ENCODE measurements at regions of chr10 and their contacts with region 1.

Region 1: DNA sequence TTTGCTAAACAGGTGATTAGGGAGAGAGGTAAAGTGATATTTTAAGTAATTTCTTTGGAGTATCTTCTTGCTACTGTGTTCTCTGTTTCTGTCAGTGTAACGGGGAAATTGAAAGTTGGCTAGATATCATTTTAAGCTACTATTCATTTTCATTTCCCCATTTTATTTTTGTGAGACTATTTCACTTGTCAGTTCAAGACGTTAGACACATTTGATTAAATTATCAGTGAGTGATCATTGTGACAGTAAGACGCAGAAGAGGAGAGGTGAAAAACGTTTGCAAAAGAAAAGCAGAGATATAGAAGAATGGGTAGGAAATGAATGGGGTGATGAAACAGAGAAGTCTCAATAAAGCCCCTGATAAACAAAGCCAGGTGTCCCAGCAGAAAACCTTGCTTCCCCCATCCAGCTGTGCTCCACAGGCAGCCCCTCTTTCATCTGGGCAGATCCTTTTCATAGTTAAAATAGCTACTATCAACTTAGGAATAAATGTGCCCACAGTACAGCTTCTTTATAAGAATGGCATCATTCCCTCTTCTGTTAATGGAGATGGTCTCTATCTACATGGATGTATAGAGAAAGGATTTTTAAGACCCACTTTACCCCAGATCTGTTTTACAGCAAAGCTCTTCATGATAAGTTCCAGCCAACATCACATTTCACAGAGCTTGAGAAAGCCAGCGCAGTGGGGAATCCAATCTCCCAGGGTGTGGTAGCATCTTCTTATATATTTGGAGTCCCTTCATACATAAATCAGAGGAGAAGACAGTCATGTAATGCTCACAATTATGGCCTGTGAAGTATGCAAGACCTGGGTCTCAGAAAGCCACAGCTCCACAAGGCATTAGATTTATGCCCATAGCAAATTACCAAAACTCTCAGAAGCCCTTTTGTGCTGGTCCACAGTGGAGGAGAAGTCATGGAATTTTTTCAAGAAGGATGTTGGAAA is 138.1 kb upstream of the ITGB1 start:
- DNase-seq: peak; percentile 84
- H3K4me3 ChIP-seq: peak overlapping the region; percentile 35
- H3K27ac ChIP-seq: peak overlapping the region; percentile 99
- H3K4me1 ChIP-seq: peaks cover 54% of the 10 kb centered on the region
- CTCF ChIP-seq: no peak

Region 2: GRCh38 chr10:32318476-32318896 is 777.7 kb before region 1 on chr10:
- CTCF ChIA-PET with region 1: no interaction called
- POLR2A ChIA-PET with region 1: no interaction called
- intact Hi-C with region 1: loop called (anchors 5 kb)
- DNase-seq: peak; percentile 33
- H3K4me3 ChIP-seq: peak overlapping the region; percentile 55
- H3K27ac ChIP-seq: peak overlapping the region; percentile 88
- H3K4me1 ChIP-seq: peaks cover 66% of the 10 kb centered on the region
- CTCF ChIP-seq: no peak

Region 3: DNA sequence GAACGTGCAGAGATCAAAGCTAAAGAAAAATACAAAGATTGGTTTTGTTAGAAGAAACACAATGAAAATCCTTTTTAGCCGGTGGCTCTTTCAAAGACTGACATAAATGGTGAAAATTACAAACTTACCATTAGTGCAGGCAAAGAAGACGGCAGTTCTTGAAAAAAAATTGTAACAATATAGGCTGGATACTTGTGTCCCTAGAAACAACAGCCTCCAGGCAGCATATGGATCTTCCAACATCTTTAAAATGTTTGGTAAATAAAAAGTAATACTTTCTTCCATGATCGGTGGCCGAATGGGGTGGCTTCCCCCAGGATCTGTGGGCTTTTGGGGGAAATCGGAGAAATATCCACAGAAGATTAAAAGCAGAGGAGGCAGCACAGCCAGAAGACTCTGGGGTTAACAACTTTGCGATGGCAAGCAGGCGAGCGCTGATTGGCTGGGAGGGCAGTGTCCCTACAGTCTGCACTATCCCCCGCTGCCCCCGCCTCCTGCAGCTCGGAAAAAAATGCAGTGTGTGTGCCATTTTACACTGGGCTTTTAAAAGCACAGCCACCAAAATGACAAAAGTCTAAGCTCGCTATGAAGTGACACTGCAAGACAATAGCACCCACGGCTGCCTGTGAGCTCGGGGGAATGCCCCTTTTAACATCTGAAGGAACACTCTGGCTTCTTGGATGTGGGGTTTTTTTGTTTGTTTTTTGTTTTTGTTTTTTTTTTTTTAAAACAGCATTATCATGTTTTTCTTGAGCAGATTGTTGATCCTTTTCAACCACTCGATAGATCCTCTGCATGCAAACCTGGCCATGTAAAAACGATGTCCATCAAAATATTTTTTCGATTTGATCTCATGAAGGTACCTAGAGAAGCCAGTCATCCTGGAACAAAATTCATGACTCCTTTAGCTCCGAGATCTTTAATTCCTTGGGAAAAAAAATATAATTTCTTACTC is 717.5 kb before region 1 on chr10:
- CTCF ChIA-PET with region 1: no interaction called
- POLR2A ChIA-PET with region 1: no interaction called
- intact Hi-C with region 1: loop called (anchors 10 kb)
- DNase-seq: peak; percentile 95
- H3K4me3 ChIP-seq: peak overlapping the region; percentile 89
- H3K27ac ChIP-seq: peak overlapping the region; percentile 82
- H3K4me1 ChIP-seq: peaks cover 14% of the 10 kb centered on the region
- CTCF ChIP-seq: no peak

Region 4: DNA sequence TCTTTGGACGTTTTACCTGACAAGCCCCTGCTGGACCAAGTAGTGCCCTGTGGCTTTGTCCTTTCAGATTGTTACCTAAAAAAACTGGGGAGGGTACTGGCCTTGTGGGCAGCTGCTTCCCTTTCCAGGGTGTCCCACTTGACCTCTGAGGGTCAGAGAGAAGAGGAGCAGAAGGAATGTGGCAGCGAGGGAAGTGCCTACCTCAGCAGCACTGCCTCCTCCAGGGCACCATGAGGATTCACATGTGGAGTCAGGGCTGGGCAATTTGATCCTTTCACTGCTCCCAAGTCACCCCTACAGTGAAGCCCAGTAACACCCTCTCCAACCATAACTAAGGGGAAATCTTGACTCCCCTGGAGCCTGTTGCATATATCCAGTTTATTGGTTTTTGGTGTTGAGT is 202.7 kb before region 1 on chr10:
- CTCF ChIA-PET with region 1: no interaction called
- POLR2A ChIA-PET with region 1: no interaction called
- intact Hi-C with region 1: no loop called
- DNase-seq: no peak
- H3K4me3 ChIP-seq: no peak overlapping the region
- H3K27ac ChIP-seq: no peak overlapping the region
- H3K4me1 ChIP-seq: no peaks in the 10 kb centered on the region
- CTCF ChIP-seq: 0 out of 2 replicates have a peak, but pooled peaks have one; percentile 7

Region 5: GRCh38 chr10:32958085-32959005 is 137.8 kb before region 1 on chr10 and contains the start of gene ITGB1:
- CTCF ChIA-PET with region 1: no interaction called
- POLR2A ChIA-PET with region 1: interaction called, 7 read pairs
- intact Hi-C with region 1: loop called (anchors 5 kb)
- DNase-seq: peak; percentile 85
- H3K4me3 ChIP-seq: peak within 1 kb of the TSS; percentile 94
- H3K27ac ChIP-seq: peak within 1 kb of the TSS; percentile 79
- H3K4me1 ChIP-seq: peaks cover 61% of the 10 kb centered on the region
- CTCF ChIP-seq: no peak
- total RNA-seq, gene ITGB1: 165 and 179 TPM in 2 replicates

Region 6: GRCh38 chr10:33115738-33116719 is 19.9 kb after region 1 on chr10:
- CTCF ChIA-PET with region 1: interaction called, 3 read pairs
- POLR2A ChIA-PET with region 1: interaction called, 78 read pairs
- intact Hi-C with region 1: loop called (anchors 2 kb)
- DNase-seq: peak; percentile 55
- H3K4me3 ChIP-seq: no peak overlapping the region
- H3K27ac ChIP-seq: peak overlapping the region; percentile 95
- H3K4me1 ChIP-seq: peaks cover 58% of the 10 kb centered on the region
- CTCF ChIP-seq: peak; percentile 82

Region 7: GRCh38 chr10:33155720-33156638 is 59.8 kb after region 1 on chr10:
- CTCF ChIA-PET with region 1: no interaction called
- POLR2A ChIA-PET with region 1: interaction called, 6 read pairs
- intact Hi-C with region 1: loop called (anchors 5 kb)
- DNase-seq: peak; percentile 79
- H3K4me3 ChIP-seq: no peak overlapping the region
- H3K27ac ChIP-seq: no peak overlapping the region
- H3K4me1 ChIP-seq: peaks cover 48% of the 10 kb centered on the region
- CTCF ChIP-seq: peak; percentile 96